Ovary (tissue), 10 donors: ENCODE measurements at regions of chr14 and their contacts with region 1.

Region 1: DNA sequence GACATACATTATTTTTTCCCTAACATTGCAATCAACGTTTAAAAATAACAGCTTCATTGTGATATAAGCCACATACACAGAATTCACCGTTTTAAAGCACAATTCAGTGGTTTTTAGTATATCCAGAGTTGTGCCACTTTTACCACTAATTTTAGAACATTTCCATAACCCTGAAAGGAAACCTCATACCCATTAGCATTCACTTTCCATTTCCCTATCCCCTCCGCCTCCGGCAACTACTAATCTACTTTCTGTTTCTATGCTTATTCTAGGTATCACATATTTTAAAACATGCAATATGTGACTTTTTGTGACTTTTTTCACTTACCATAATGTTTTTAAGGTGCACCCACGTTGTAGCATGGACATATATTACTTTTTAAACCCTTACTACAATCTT is 55.6 kb upstream of the ISM2 start:
- DNase-seq: no peak
- H3K4me3 ChIP-seq: no peak overlapping the region
- H3K27ac ChIP-seq: no peak overlapping the region
- H3K4me1 ChIP-seq: peaks cover 2% of the 10 kb centered on the region
- H3K27me3 ChIP-seq: no peaks in the 10 kb centered on the region
- CTCF ChIP-seq: no peak
- EP300 ChIP-seq: no peak
- POLR2A ChIP-seq: no peak

Region 2: DNA sequence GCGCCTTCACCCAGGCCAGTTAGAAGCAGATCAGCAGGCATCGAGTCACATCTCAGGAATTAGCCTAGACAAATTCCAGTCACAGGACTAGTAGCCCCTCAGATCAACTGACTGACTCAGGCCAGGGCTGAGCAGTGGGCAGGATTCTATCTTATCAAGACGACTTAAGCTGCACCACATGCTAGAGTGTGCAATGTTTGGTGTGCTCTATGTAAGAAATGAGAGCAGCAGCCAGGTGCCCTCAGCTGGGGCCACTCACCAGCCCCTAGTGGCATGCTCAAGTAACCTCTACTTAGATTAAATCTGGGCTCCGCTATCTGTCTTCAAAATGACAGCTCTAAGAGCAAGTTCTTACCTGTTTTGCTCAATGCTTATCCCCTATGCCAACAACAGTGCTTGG is 263.5 kb before region 1 on chr14:
- intact Hi-C with region 1: loop called in 1 of 4 experiments (anchors 10 kb)
- DNase-seq: no peak
- H3K4me3 ChIP-seq: no peak overlapping the region
- H3K27ac ChIP-seq: no peak overlapping the region
- H3K4me1 ChIP-seq: no peaks in the 10 kb centered on the region
- H3K27me3 ChIP-seq: no peaks in the 10 kb centered on the region
- CTCF ChIP-seq: no peak
- EP300 ChIP-seq: no peak
- POLR2A ChIP-seq: no peak

Region 3: GRCh38 chr14:77406718-77407117 is 147.5 kb before region 1 on chr14:
- intact Hi-C with region 1: no loop called
- DNase-seq: peak in 3 of 5 donors; percentile 20 to 35 (median 23)
- H3K4me3 ChIP-seq: no peak overlapping the region
- H3K27ac ChIP-seq: no peak overlapping the region
- H3K4me1 ChIP-seq: peaks cover 1% of the 10 kb centered on the region
- H3K27me3 ChIP-seq: no peaks in the 10 kb centered on the region
- CTCF ChIP-seq: no peak
- EP300 ChIP-seq: no peak
- POLR2A ChIP-seq: no peak

Region 4: DNA sequence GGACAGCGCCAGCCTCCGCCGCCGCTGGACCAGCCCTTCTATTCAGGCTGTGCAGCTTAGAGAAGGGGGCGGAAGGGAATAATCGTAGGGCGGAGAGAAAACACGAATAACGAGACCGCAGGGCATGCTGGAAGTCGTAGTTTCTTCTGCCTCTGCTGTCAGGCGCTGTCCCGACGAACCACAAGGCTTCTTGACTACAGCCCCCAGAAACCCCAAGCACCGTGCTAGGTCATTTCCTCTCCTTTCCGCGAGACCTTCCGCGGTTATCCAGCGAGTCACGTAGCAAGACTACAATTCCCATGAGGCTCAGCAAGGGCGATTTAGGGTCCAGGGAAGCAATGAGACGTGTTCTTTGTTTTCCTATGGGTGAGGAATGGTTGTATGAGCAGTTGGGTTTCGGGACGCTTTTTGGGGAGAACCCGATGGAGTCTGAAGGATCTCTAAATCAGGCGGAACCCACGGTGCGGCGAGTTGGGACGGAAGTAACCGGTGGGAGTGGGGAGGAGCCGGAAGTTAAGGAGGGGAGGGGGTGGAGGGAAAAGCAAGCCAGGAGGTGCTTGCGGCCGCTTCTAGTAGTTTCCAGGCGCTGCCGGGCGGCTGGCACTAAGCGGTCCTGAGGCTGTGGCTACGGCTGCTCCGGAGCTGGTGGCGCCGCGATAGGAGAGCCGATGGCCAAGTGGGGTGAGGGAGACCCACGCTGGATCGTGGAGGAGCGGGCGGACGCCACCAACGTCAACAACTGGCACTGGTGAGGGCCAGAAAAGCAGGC is 96.5 kb before region 1 on chr14 and contains the starts of genes AHSA1 and VIPAS39:
- intact Hi-C with region 1: loop called in 3 of 4 experiments (anchors 10 kb)
- DNase-seq: peak; percentile 91 to 95 (median 92)
- H3K4me3 ChIP-seq: peak within 1 kb of the TSS; percentile 82
- H3K27ac ChIP-seq: peak within 1 kb of the TSS; percentile 84 to 97
- H3K4me1 ChIP-seq: no peaks in the 10 kb centered on the region
- H3K27me3 ChIP-seq: no peaks in the 10 kb centered on the region
- CTCF ChIP-seq: no peak
- EP300 ChIP-seq: no peak
- POLR2A ChIP-seq: peak; percentile 62
- total RNA-seq, gene AHSA1: 57.3 to 127 (median 96.6) TPM
- total RNA-seq, gene VIPAS39: 10.7 to 18.0 (median 15.1) TPM